ENCODE measurements at regions of chr1 and their contacts with region 1.

Region 1: DNA sequence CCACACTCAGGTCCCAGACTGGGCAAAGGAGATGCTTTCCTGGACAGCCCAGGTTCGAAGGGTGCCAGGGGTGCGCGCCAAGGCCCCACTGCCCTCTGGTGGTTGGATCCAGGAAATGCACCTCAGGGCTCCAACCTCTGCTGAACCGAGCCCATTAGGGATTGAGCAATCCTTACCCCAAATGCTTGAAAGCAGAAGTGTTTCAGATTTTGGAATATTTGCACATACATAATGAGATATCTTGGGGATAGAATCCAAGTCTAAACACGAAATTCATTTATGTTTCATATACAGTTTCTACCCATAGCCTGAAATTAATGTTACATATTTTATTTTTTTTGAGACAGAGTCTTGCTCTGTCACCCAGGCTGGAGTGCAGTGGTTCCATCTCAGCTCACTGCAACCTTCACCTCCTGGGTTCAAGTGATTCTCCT is 57.4 kb downstream of the SLC9A1 start:
- DNase-seq: peak; percentile 66
- H3K4me3 Mint-ChIP-seq: no peak overlapping the region
- H3K27ac Mint-ChIP-seq: no peak overlapping the region
- H3K4me1 Mint-ChIP-seq: peaks cover 2% of the 10 kb centered on the region
- H3K27me3 Mint-ChIP-seq: no peaks in the 10 kb centered on the region

Region 2: GRCh38 chr1:26970810-26971209 is 126.7 kb before region 1 on chr1:
- intact Hi-C with region 1: no loop called
- DNase-seq: no peak
- H3K4me3 Mint-ChIP-seq: no peak overlapping the region
- H3K27ac Mint-ChIP-seq: no peak overlapping the region
- H3K4me1 Mint-ChIP-seq: peaks cover 3% of the 10 kb centered on the region
- H3K27me3 Mint-ChIP-seq: peaks cover 11% of the 10 kb centered on the region

Region 3: GRCh38 chr1:27044613-27045151 is 52.8 kb before region 1 on chr1:
- intact Hi-C with region 1: loop called (anchors 1 kb)
- DNase-seq: peak; percentile 77
- H3K4me3 Mint-ChIP-seq: peak overlapping the region; percentile 62
- H3K27ac Mint-ChIP-seq: no peak overlapping the region
- H3K4me1 Mint-ChIP-seq: peaks cover 16% of the 10 kb centered on the region
- H3K27me3 Mint-ChIP-seq: no peaks in the 10 kb centered on the region